Calu3 (cell line): ENCODE measurements at regions of chr6 and their contacts with region 1.

Region 1: GRCh38 chr6:18595774-18596530 is 208.8 kb downstream of the RNF144B start:
- DNase-seq: peak; percentile 55
- H3K4me3 Mint-ChIP-seq: no peak overlapping the region
- H3K27ac Mint-ChIP-seq: no peak overlapping the region
- H3K4me1 Mint-ChIP-seq: no peaks in the 10 kb centered on the region
- H3K27me3 Mint-ChIP-seq: peaks cover 29% of the 10 kb centered on the region
- CTCF ChIP-seq: peak; percentile 58

Region 2: GRCh38 chr6:18323935-18324705 is 271.8 kb before region 1 on chr6:
- CTCF ChIA-PET with region 1: no interaction called
- intact Hi-C with region 1: loop called (anchors 10 kb)
- DNase-seq: peak; percentile 13
- H3K4me3 Mint-ChIP-seq: no peak overlapping the region
- H3K27ac Mint-ChIP-seq: no peak overlapping the region
- H3K4me1 Mint-ChIP-seq: no peaks in the 10 kb centered on the region
- H3K27me3 Mint-ChIP-seq: no peaks in the 10 kb centered on the region
- CTCF ChIP-seq: peak; percentile 39

Region 3: DNA sequence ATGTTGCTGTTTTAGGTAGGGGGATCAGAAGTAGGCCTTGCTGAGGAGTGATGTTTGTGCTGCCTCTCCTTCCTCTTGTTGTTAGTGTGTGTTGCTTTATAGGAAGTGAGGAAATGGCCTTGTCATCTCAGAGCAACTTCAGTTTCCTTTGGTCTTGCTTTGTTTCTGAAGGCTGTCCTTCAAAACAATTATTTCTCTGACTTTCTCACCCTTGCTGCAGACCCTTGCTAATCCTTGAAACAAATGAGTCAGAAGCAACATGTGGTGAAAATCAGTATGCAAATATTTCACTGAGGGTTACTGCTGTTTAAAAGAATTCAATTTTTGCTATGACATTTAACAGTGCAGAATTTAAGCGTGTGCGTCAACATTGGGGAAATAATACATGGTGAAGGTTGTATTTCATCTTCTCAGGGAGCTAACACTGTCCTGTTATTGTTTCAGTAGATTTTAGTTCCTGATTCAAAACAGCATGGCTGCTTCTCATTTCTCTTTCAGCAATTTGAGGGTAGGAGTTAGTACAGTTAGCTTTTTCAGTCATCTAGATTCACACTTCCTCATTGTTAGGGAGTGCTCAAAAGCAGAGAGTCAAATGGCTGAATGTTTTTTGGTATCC is 195.0 kb before region 1 on chr6:
- CTCF ChIA-PET with region 1: no interaction called
- intact Hi-C with region 1: no loop called
- DNase-seq: no peak
- H3K4me3 Mint-ChIP-seq: no peak overlapping the region
- H3K27ac Mint-ChIP-seq: no peak overlapping the region
- H3K4me1 Mint-ChIP-seq: no peaks in the 10 kb centered on the region
- H3K27me3 Mint-ChIP-seq: no peaks in the 10 kb centered on the region
- CTCF ChIP-seq: no peak

Region 4: DNA sequence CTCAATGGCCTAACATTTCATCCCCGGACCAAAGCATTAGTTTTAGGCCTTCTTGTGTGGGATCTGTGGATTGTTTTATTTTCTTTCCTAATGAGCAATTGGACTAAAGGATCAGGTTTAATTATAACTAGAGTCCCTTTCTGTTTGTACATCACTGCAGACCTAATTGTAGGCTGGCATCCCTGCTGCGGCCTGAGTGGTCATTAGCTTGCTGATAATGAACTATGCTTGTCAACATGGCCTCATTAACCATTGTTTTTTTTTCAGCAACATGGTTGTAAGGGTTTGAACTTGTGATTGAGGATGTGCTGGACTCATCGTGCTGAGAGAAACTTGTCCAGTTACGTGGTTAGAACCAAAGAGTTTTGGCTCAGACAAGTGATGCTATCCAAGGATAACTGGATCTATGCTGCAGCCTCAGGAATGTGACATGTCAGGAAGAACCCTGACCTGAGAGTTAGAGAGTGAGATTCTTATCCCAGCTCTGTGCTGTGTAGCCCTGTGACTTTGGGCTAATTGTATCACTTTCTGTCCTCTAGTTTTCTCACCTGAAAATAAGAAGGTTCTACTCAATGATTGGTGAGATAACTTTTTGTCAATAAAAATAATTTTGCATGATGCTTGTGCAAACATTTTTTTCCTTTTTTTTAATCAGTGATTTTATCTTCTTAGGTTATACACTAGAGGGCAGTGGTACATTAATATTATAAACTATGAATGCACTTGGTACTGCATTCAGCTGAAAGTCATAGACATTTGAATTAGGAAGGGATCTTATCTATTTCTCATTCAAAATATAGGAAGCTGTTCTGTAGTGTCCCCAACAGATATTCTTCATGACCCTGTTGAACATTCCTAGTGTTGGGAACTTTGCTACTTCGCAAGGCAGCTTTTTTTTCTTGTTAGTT is 67.9 kb before region 1 on chr6:
- CTCF ChIA-PET with region 1: no interaction called
- intact Hi-C with region 1: loop called (anchors 1 kb)
- DNase-seq: no peak
- H3K4me3 Mint-ChIP-seq: no peak overlapping the region
- H3K27ac Mint-ChIP-seq: no peak overlapping the region
- H3K4me1 Mint-ChIP-seq: no peaks in the 10 kb centered on the region
- H3K27me3 Mint-ChIP-seq: peaks cover 13% of the 10 kb centered on the region
- CTCF ChIP-seq: no peak

Region 5: DNA sequence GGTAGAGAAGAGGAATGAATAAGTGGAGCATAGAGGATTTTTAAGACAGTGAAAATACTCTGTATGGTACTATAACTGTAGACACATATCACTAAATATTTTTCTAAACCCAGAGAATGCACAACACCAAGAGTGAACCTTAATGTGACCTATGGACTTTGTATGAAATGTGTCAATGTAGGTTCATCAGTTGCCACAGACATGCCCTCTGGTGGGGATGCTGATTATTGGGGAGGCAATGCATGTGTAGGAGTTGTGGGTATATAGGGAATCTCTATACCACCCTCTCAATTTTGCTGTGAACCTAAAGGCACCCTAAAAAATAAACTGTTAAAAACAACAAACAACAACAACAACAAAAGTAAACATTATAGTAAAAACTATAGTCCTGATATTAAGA is 84.9 kb after region 1 on chr6:
- CTCF ChIA-PET with region 1: no interaction called
- intact Hi-C with region 1: no loop called
- DNase-seq: no peak
- H3K4me3 Mint-ChIP-seq: no peak overlapping the region
- H3K27ac Mint-ChIP-seq: no peak overlapping the region
- H3K4me1 Mint-ChIP-seq: no peaks in the 10 kb centered on the region
- H3K27me3 Mint-ChIP-seq: no peaks in the 10 kb centered on the region
- CTCF ChIP-seq: no peak

Region 6: GRCh38 chr6:18733921-18734550 is 138.1 kb after region 1 on chr6:
- CTCF ChIA-PET with region 1: no interaction called
- intact Hi-C with region 1: loop called (anchors 10 kb)
- DNase-seq: no peak
- H3K4me3 Mint-ChIP-seq: no peak overlapping the region
- H3K27ac Mint-ChIP-seq: no peak overlapping the region
- H3K4me1 Mint-ChIP-seq: no peaks in the 10 kb centered on the region
- H3K27me3 Mint-ChIP-seq: no peaks in the 10 kb centered on the region
- CTCF ChIP-seq: no peak

Region 7: DNA sequence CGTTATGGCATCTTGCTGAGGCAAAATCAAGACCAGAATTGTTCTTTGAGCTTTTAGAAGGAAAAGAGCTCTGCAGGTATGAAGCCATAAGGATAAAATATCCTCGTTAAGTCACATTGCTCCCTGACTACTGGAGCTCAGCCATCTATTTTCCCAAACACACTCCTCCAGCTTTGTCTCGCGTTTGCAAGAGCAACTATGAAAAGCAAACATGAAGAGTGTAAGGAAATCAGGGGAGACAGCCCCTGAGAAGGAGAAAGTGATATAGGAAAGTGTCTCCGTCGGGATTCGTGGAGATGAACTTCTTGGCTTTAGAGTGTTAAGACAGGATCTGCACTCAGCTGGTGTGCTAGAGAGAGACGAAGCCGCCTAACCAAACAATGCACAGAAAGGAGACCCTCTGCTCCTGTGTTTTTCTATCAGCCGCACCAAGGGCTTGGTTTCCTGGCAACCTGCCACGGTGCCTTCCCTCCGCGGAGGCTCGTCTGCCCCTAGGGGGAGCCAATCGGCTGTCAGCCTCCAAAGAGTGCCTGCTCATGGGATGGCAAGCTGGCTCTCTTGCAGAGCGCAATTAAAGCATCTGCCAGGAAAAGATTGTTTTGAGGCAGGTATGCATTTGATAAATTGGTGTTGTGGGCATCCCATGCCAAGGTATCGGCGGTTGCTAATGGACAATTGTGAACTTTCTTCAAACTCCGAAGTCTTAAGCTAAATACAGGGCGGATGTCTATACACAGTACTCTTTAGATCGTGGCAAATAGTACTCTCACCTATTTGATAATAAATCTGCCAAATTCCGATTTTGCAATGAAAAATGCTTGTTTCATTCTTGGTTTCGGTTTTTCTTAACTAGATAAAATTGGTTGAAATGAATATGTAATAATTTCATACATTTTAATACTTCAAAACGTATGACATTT is 394.4 kb after region 1 on chr6:
- CTCF ChIA-PET with region 1: no interaction called
- intact Hi-C with region 1: loop called (anchors 10 kb)
- DNase-seq: peak; percentile 66
- H3K4me3 Mint-ChIP-seq: no peak overlapping the region
- H3K27ac Mint-ChIP-seq: no peak overlapping the region
- H3K4me1 Mint-ChIP-seq: no peaks in the 10 kb centered on the region
- H3K27me3 Mint-ChIP-seq: no peaks in the 10 kb centered on the region
- CTCF ChIP-seq: peak; percentile 32